PC-3 (cell line): ENCODE measurements at regions of chr9 and their contacts with region 1.

Region 1: GRCh38 chr9:95875305-95876137 is at the start of gene ERCC6L2:
- DNase-seq: peak; percentile 97
- ATAC-seq: peak; percentile 83
- H3K4me3 ChIP-seq: no peak within 1 kb of the TSS
- H3K27ac ChIP-seq: peak within 1 kb of the TSS; percentile 96
- H3K4me1 ChIP-seq: peaks cover 21% of the 10 kb centered on the region
- H3K27me3 ChIP-seq: no peaks in the 10 kb centered on the region
- CTCF ChIP-seq: no peak
- total RNA-seq, gene ERCC6L2: 18.8 and 32.7 TPM in 2 replicates

Region 2: GRCh38 chr9:95793924-95794828 is 81.3 kb before region 1 on chr9:
- CTCF ChIA-PET with region 1: no interaction called
- POLR2A ChIA-PET with region 1: interaction called, 3 read pairs
- intact Hi-C with region 1: loop called (anchors 5 kb)
- DNase-seq: peak; percentile 81
- ATAC-seq: peak; percentile 92
- H3K4me3 ChIP-seq: no peak overlapping the region
- H3K27ac ChIP-seq: peak overlapping the region; percentile 31
- H3K4me1 ChIP-seq: peaks cover 15% of the 10 kb centered on the region
- H3K27me3 ChIP-seq: no peaks in the 10 kb centered on the region
- CTCF ChIP-seq: no peak